Esophagus muscularis mucosa (tissue), 4 donors: ENCODE measurements at regions of chr15 and their contacts with region 1.

Region 1: DNA sequence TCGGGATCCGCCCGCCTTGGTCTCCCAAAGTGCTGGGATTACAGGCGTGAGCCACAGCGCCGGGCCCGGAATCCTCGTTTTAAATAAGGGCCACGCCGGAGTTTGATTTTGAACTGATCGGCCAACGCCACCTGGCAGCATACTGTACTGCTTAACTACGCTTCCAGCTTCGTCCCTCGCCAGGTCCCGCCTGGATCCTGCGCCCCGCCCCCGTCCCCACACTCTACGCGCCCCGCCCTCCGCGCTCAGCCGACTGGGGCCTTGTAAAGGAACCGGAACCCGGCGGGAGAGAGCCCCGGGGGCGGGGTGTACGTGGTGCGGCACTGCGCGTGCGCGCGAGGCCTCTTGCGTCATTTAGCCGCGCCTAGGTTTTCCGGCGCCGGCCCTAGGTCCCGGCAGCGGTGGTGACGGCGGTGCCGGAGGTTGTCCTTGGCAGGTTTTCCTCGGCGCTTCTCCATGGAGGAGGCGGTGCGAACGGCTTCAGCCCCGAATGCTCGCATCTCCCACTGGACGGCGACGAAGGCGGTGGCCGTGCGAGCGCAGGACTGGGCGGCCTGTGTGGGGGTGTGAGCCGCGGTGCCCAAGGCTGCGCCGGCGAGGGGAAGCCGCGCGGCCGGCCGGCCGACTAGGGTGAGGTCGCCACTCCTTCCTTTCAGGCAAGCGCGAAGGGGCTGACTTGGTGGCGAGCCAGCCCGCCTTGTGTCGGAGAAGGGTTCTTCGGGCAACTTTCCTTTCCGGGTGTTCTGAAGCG is at the start of gene NIPA2:
- DNase-seq: peak; percentile 100
- H3K4me3 ChIP-seq: peak within 1 kb of the TSS; percentile 77 to 90 (median 80)
- H3K27ac ChIP-seq: peak within 1 kb of the TSS; percentile 88 to 98 (median 96)
- H3K4me1 ChIP-seq: peaks cover 15 to 37% (median 27%) of the 10 kb centered on the region in 4 donors
- H3K27me3 ChIP-seq: no peaks in the 10 kb centered on the region
- CTCF ChIP-seq: no peak
- EP300 ChIP-seq: no peak
- POLR2A ChIP-seq: peak; percentile 55
- total RNA-seq, gene NIPA2: 29.9 to 41.3 (median 34.5) TPM

Region 2: GRCh38 chr15:22786868-22787698 is 51.4 kb before region 1 on chr15:
- intact Hi-C with region 1: loop called (anchors 2 kb)
- DNase-seq: no peak
- H3K4me3 ChIP-seq: peak overlapping the region; percentile 85 to 93 (median 86)
- H3K27ac ChIP-seq: peak overlapping the region; percentile 91 to 94 (median 93)
- H3K4me1 ChIP-seq: peaks cover 7 to 18% (median 14%) of the 10 kb centered on the region in 4 donors
- H3K27me3 ChIP-seq: no peaks in the 10 kb centered on the region
- CTCF ChIP-seq: no peak
- EP300 ChIP-seq: no peak
- POLR2A ChIP-seq: no peak

Region 3: GRCh38 chr15:22922003-22922402 is 83.5 kb after region 1 on chr15:
- intact Hi-C with region 1: no loop called
- DNase-seq: no peak
- H3K4me3 ChIP-seq: no peak overlapping the region
- H3K27ac ChIP-seq: no peak overlapping the region
- H3K4me1 ChIP-seq: peaks cover 0 to 4% (median 0%) of the 10 kb centered on the region in 4 donors
- H3K27me3 ChIP-seq: no peaks in the 10 kb centered on the region
- CTCF ChIP-seq: no peak
- EP300 ChIP-seq: no peak
- POLR2A ChIP-seq: no peak

Region 4: DNA sequence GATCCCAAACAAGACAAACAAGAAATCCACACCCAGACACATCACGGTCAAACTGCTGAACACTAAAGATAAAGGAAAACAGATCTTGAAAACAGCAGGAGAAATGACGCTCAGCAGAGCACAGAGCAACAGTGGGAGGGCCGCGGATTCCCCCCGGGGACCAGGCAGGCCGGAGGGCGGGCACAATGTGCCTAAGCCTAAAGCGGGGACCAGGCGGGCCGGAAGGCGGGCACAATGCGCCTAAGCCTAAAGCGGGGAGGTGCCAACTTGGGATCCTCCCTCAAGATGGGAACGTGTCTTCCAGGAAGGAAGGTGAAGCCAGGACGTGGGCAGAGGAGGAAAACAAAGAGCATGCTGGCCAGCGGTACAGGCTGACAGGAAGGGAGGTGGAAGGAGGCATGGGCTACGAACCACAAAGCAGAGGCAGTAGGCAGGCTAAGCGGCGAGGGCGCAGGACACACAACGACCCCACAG is 110.6 kb after region 1 on chr15:
- intact Hi-C with region 1: loop called (anchors 10 kb)
- DNase-seq: no peak
- H3K4me3 ChIP-seq: peak overlapping the region in 1 of 4 donors; percentile 19
- H3K27ac ChIP-seq: peak overlapping the region in 3 of 4 donors; percentile 5 to 62 (median 47)
- H3K4me1 ChIP-seq: peaks cover 48 to 80% (median 71%) of the 10 kb centered on the region in 4 donors
- H3K27me3 ChIP-seq: no peaks in the 10 kb centered on the region
- CTCF ChIP-seq: no peak
- EP300 ChIP-seq: no peak
- POLR2A ChIP-seq: no peak

Region 5: DNA sequence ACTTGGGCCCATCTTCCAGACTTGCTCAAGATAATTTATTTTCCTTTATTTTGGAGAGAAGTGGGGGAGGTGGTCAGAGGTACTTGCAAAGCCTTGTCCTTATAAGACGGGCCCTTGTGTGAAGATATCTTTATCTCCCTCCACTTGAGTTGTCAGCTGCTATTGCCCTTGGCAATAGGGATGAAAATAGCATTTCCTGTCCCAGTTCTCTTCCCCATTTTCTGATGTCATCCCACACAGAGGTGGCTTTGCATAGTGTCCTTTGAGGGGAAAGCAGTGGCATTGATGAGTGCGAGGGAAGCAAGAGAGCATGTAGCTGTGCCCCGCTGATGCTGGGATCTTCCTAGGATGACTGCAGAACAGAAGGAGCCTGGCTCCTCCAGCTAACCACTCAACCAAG is 242.8 kb after region 1 on chr15:
- intact Hi-C with region 1: no loop called
- DNase-seq: no peak
- H3K4me3 ChIP-seq: no peak overlapping the region
- H3K27ac ChIP-seq: no peak overlapping the region
- H3K4me1 ChIP-seq: no peaks in the 10 kb centered on the region
- H3K27me3 ChIP-seq: no peaks in the 10 kb centered on the region
- CTCF ChIP-seq: no peak
- EP300 ChIP-seq: no peak
- POLR2A ChIP-seq: no peak